ENCODE measurements at regions of chr20 and their contacts with region 1.

Region 1: DNA sequence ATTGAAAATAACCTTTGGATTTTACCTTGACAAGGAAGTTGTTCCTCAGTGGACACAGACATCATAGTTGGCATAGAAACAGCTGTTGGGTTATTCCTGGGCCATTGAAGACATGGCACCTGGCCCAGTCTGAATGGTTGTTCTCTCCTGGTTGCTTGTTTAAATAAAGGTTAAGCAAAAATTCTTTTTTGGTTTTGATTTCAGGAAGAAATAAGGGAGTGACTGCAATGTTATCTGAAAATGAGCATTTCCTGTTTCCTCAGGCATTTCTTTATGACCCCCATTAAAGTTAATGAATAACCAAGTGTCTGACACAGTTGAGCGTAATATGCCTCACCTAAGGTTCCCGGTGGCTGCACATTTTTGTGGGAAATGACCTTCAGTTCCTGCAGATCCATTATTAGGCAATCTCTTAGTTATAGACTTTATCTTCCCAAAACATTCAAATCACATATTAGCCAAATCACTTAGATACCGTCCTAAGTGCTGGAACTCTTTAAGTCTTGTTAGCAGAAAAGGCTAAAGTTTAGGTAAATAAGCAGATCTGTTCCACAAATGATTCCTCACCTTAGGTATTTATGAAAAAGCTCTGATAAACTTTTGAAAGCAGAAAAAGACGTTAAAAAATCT is 648.7 kb upstream of the FLRT3 start:
- DNase-seq: no peak
- H3K4me3 ChIP-seq: no peak overlapping the region
- H3K27ac ChIP-seq: no peak overlapping the region
- H3K4me1 ChIP-seq: no peaks in the 10 kb centered on the region
- H3K27me3 ChIP-seq: no peaks in the 10 kb centered on the region
- CTCF ChIP-seq: no peak
- POLR2A ChIP-seq: no peak

Region 2: GRCh38 chr20:14919480-14920440 is 66.4 kb before region 1 on chr20:
- intact Hi-C with region 1: loop called (anchors 10 kb)
- DNase-seq: no peak
- H3K4me3 ChIP-seq: no peak overlapping the region
- H3K27ac ChIP-seq: no peak overlapping the region
- H3K4me1 ChIP-seq: no peaks in the 10 kb centered on the region
- H3K27me3 ChIP-seq: peaks cover 0 to 4% (median 0%) of the 10 kb centered on the region in 7 donors
- CTCF ChIP-seq: no peak
- POLR2A ChIP-seq: no peak

Region 3: DNA sequence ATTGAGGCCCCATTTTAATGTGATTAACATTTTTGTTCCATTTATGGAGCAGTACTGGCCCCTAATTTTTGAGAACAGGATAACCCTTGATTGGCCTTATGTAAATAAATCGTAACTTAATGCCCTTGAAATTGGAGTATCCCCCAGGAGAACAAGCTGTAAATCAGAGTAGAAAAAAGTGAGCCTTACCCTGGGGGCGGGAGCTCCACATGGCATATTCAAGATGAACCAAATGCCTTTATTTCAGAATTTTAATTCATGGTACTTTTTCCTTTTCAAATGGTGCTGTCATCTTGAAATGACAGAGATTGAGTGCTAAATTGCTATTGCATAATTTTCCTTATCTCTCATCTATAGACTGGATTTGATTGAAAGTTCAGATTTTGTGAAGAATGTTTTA is 160.8 kb after region 1 on chr20:
- intact Hi-C with region 1: no loop called
- DNase-seq: no peak
- H3K4me3 ChIP-seq: no peak overlapping the region
- H3K27ac ChIP-seq: no peak overlapping the region
- H3K4me1 ChIP-seq: no peaks in the 10 kb centered on the region
- H3K27me3 ChIP-seq: no peaks in the 10 kb centered on the region
- CTCF ChIP-seq: no peak
- POLR2A ChIP-seq: no peak

Region 4: DNA sequence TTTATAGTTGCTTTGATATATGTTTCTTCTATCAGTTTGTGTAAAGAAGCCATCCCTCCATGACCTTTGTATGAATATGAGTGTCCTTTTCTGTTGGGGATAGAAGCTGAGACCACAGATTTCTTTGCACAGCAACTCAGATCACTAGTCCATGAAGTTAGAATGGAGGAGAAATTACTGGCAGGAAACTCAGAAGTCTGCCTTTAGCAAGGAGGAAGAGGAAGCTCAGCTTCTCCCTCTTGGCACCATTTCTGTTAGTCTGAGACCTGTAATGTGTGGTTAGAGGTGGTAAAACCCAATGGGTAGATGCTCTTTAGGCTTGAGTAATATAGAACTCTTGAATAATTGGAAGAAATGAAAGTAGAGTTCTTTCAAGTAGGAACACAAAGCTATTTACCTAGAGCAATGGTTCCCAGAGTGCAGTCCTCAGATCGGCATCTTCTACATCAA is 346.6 kb after region 1 on chr20:
- intact Hi-C with region 1: no loop called
- DNase-seq: no peak
- H3K4me3 ChIP-seq: peak overlapping the region in 2 of 8 donors; percentile 15 to 38
- H3K27ac ChIP-seq: peak overlapping the region in 3 of 8 donors; percentile 11 to 42 (median 15)
- H3K4me1 ChIP-seq: no peaks in the 10 kb centered on the region
- H3K27me3 ChIP-seq: no peaks in the 10 kb centered on the region
- CTCF ChIP-seq: no peak
- POLR2A ChIP-seq: no peak